ENCODE measurements at regions of chr3 and their contacts with region 1.

Region 1: DNA sequence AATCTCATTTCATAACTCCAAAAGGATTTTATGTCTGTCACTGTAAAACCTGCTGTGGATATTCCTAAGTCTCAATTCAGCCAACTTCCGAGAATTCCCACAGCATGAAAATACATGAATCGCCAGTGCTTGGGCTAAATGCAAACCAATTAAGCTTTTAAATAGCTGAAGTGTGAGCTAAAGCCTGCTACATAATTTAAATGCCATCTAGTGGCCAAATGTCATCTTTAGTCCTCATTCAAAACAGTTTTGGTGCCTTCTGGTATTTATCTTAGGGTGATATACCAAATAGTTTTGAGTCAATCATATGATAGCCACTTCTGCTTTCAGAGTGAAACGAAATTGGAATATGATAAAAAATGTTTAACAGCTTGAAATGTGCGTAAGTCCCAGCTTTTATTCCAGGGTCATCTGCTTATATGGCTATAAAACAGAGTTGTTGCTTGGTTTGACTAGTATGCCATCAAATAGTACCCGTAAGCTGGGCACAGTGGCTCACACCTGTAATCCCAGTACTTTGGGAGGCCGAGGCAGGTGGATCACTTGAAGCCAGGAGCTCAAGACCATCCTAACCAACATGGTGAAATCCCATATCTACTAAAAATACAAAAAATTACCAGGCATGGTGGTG is 41.8 kb upstream of the CCNL1 start:
- DNase-seq: no peak
- H3K4me3 ChIP-seq: no peak overlapping the region
- H3K27ac ChIP-seq: no peak overlapping the region
- H3K4me1 ChIP-seq: peaks cover 0 to 6% (median 2%) of the 10 kb centered on the region in 4 donors
- H3K27me3 ChIP-seq: no peaks in the 10 kb centered on the region
- CTCF ChIP-seq: peak in 4 of 5 experiments; percentile 45 to 60 (median 52)
- EP300 ChIP-seq: no peak
- POLR2A ChIP-seq: no peak

Region 2: GRCh38 chr3:157493627-157494550 is 292.1 kb after region 1 on chr3:
- in situ Hi-C with region 1: loop called (anchors 10 to 25 kb)
- intact Hi-C with region 1: loop called (anchors 5 kb)
- DNase-seq: no peak
- H3K4me3 ChIP-seq: no peak overlapping the region
- H3K27ac ChIP-seq: no peak overlapping the region
- H3K4me1 ChIP-seq: peaks cover 0 to under 1% (median under 1%) of the 10 kb centered on the region in 4 donors
- H3K27me3 ChIP-seq: no peaks in the 10 kb centered on the region
- CTCF ChIP-seq: peak; percentile 40 to 52 (median 47)
- EP300 ChIP-seq: no peak
- POLR2A ChIP-seq: no peak

Region 3: DNA sequence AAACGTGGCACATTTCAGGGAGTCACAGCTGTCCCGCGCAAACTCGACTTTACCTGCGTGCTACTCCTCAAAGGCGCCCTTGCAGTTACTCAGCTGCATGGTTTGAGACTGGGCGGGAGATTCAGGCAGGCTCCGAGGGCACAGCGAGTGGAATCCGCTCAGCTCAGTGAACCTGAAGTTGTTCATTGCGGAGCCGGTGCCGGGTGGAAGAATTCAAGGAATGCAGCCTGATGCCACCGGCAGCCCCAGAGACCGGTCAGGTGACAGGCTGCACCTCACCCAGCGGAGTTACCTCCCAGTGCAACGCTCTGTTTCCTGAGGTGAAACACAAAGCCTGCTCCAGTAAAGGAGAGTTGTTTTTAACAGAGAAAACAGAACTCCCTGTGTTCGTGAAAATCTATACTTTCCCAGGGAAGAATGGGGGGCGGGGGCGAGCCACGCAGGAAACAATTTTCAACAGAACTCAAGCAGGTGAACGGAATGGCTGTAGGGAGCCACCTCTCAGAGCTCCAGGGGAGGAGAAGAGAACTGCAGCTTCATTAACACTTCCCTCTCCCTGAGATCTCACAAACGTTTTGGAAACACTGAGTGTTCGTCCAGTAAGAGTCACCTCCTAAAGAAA is 297.7 kb after region 1 on chr3:
- in situ Hi-C with region 1: loop called (anchors 10 to 25 kb)
- intact Hi-C with region 1: loop called (anchors 5 kb)
- DNase-seq: peak; percentile 45
- H3K4me3 ChIP-seq: peak overlapping the region in 2 of 4 donors; percentile 20 to 44
- H3K27ac ChIP-seq: peak overlapping the region in 3 of 4 donors; percentile 9 to 21 (median 10)
- H3K4me1 ChIP-seq: peaks cover 5 to 30% (median 17%) of the 10 kb centered on the region in 4 donors
- H3K27me3 ChIP-seq: peaks cover 13% of the 10 kb centered on the region
- CTCF ChIP-seq: peak; percentile 2 to 47 (median 9)
- EP300 ChIP-seq: no peak
- POLR2A ChIP-seq: no peak